ENCODE measurements at regions of chr4 and their contacts with region 1.

Region 1: DNA sequence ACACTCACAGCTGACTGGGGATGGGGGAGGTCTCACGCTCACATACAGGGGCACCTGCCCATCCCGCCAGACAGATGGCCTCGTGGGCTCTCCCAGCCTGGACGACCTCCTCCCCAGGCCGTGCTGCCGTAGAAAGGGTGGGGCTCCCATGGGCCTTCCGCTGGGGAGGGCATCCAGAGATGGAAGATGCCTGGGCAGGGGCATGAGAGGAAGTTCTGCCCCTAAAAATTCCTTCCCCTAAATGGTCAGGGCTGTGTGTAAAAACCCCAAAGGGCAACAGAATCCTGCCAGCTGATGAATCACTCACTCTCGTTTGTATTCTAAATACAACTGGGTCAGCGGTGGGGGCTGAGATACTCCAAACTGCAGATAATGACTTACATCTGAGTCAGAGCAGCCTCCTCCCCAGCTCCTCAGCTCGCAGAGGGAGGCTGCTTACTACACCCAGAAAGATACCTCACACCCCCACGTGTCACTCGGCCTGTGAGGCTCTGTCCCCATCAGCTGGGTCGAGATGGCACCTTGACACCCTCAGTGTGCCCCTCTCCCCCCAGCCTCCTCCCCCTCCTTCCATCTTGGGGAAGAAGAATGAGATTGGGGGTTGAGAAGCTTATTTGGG is 10.1 kb downstream of the WDR1 start:
- DNase-seq: peak; percentile 14 to 83 (median 72)
- ATAC-seq: peak; percentile 77
- H3K4me3 ChIP-seq: no peak overlapping the region
- H3K4me3 Mint-ChIP-seq: peak overlapping the region; percentile 61
- H3K27ac ChIP-seq: peak overlapping the region; percentile 38 to 78
- H3K27ac Mint-ChIP-seq: peak overlapping the region; percentile 94
- H3K4me1 ChIP-seq: peaks cover 97% of the 10 kb centered on the region
- H3K4me1 Mint-ChIP-seq: peaks cover 99% of the 10 kb centered on the region
- H3K27me3 ChIP-seq: no peaks in the 10 kb centered on the region
- H3K27me3 Mint-ChIP-seq: no peaks in the 10 kb centered on the region
- CTCF ChIP-seq: no peak

Region 2: GRCh38 chr4:8158710-8159536 is 1947.6 kb before region 1 on chr4 and contains the start of gene ABLIM2:
- CTCF ChIA-PET with region 1: no interaction called
- POLR2A ChIA-PET with region 1: no interaction called
- intact Hi-C with region 1: no loop called
- DNase-seq: peak; percentile 97 to 100 (median 99)
- ATAC-seq: peak; percentile 99
- H3K4me3 ChIP-seq: peak within 1 kb of the TSS; percentile 90 to 97
- H3K4me3 Mint-ChIP-seq: peak within 1 kb of the TSS; percentile 89
- H3K27ac ChIP-seq: peak within 1 kb of the TSS; percentile 48 to 56
- H3K27ac Mint-ChIP-seq: peak within 1 kb of the TSS; percentile 72
- H3K4me1 ChIP-seq: peaks cover 18% of the 10 kb centered on the region
- H3K4me1 Mint-ChIP-seq: peaks cover 16% of the 10 kb centered on the region
- H3K27me3 ChIP-seq: peaks cover 0 to 6% of the 10 kb centered on the region in 2 experiments
- H3K27me3 Mint-ChIP-seq: no peaks in the 10 kb centered on the region
- CTCF ChIP-seq: no peak
- total RNA-seq, gene ABLIM2: 1.2 to 1.6 TPM

Region 3: DNA sequence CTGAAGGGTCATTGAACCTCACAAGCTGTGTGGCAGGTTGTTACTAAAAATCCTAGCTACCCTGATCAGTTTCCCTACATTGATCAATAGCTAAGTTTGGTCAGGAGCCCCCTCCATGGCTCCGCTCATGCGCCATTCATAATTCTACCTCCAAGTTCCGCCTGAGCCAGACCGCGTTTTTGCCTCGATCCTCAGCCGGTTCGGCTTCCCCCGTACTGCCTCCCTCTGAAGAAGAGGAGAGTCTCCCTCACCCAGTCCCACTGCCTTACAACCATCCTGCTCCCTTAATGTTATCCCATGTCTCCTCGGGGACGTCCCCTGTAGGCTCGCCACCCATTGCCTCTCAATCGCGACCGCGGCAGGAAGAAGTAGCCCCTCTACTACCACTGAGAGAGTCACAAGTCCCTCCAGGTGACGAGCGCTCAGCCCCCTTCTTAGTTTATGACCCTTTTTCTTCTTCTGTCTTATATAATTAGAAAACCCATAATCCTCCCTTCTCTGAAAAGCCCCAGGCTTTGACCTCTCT is 504.1 kb before region 1 on chr4:
- CTCF ChIA-PET with region 1: no interaction called
- POLR2A ChIA-PET with region 1: no interaction called
- intact Hi-C with region 1: loop called in 1 of 2 experiments (anchors 5 kb)
- DNase-seq: no peak
- ATAC-seq: no peak
- H3K4me3 ChIP-seq: no peak overlapping the region
- H3K4me3 Mint-ChIP-seq: peak overlapping the region; percentile 18
- H3K27ac ChIP-seq: no peak overlapping the region
- H3K27ac Mint-ChIP-seq: peak overlapping the region; percentile 73
- H3K4me1 ChIP-seq: peaks cover 20% of the 10 kb centered on the region
- H3K4me1 Mint-ChIP-seq: peaks cover 43% of the 10 kb centered on the region
- H3K27me3 ChIP-seq: no peaks in the 10 kb centered on the region
- H3K27me3 Mint-ChIP-seq: no peaks in the 10 kb centered on the region
- CTCF ChIP-seq: no peak

Region 4: DNA sequence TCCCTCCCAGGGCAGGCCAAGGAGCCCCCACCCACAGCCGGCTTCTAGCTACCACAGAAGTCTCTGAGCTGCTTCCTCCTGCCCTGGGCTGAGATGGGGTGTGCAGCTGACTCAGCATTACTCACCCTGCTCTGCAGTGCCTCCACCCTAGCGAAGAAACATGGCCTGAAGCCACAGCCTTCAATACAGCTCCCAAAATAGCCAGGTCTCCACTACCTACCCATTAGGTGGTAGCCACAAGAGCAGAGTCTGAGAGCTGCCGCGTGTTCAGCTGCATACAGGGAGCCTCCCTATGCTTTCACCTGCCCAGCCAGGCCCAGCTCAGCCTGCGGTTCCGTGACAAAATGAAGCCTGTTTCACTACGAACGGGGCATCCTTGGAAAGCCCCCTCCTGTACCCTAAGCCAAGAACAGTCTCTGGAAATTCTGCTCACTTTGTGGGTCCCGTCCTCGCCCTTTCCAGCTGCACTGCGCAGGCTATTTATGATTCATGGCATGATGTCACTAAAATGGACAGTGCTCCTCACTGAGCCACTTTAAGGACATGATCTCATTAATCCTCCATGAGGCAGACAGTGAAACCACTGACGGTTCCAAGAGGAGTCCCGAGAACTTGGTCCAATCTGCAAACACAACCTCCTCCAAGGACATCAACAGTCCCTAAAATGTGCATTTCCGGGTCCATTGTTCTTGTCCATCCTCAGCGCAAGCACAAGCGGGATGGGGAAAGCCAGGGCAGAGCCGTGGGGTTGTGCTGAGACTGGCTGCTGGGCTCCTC is 10.1 kb before region 1 on chr4:
- CTCF ChIA-PET with region 1: interaction called, 6 read pairs
- POLR2A ChIA-PET with region 1: interaction called, 23 read pairs
- intact Hi-C with region 1: loop called in 1 of 2 experiments (anchors 1 kb)
- DNase-seq: peak; percentile 46 to 90 (median 83)
- ATAC-seq: peak; percentile 75
- H3K4me3 ChIP-seq: no peak overlapping the region
- H3K4me3 Mint-ChIP-seq: peak overlapping the region; percentile 37
- H3K27ac ChIP-seq: peak overlapping the region; percentile 38 to 70
- H3K27ac Mint-ChIP-seq: peak overlapping the region; percentile 87
- H3K4me1 ChIP-seq: peaks cover 94% of the 10 kb centered on the region
- H3K4me1 Mint-ChIP-seq: peaks cover 94% of the 10 kb centered on the region
- H3K27me3 ChIP-seq: no peaks in the 10 kb centered on the region
- H3K27me3 Mint-ChIP-seq: no peaks in the 10 kb centered on the region
- CTCF ChIP-seq: no peak

Region 5: GRCh38 chr4:10320130-10320529 is 213.6 kb after region 1 on chr4:
- CTCF ChIA-PET with region 1: no interaction called
- POLR2A ChIA-PET with region 1: no interaction called
- intact Hi-C with region 1: no loop called
- DNase-seq: no peak
- ATAC-seq: no peak
- H3K4me3 ChIP-seq: no peak overlapping the region
- H3K4me3 Mint-ChIP-seq: no peak overlapping the region
- H3K27ac ChIP-seq: no peak overlapping the region
- H3K27ac Mint-ChIP-seq: no peak overlapping the region
- H3K4me1 ChIP-seq: no peaks in the 10 kb centered on the region
- H3K4me1 Mint-ChIP-seq: no peaks in the 10 kb centered on the region
- H3K27me3 ChIP-seq: no peaks in the 10 kb centered on the region
- H3K27me3 Mint-ChIP-seq: peaks cover 7% of the 10 kb centered on the region
- CTCF ChIP-seq: no peak

Measured in CD8-positive, alpha-beta T cell (primary cell).